ENCODE measurements at regions of chr5 and their contacts with region 1.

Region 1: GRCh38 chr5:173238312-173239232 is 3.6 kb upstream of the NKX2-5 start:
- DNase-seq: no peak
- ATAC-seq: no peak
- H3K4me3 Mint-ChIP-seq: peak overlapping the region; percentile 27
- H3K27ac Mint-ChIP-seq: no peak overlapping the region
- H3K4me1 Mint-ChIP-seq: peaks cover 38% of the 10 kb centered on the region
- H3K27me3 Mint-ChIP-seq: peaks cover 87% of the 10 kb centered on the region

Region 2: DNA sequence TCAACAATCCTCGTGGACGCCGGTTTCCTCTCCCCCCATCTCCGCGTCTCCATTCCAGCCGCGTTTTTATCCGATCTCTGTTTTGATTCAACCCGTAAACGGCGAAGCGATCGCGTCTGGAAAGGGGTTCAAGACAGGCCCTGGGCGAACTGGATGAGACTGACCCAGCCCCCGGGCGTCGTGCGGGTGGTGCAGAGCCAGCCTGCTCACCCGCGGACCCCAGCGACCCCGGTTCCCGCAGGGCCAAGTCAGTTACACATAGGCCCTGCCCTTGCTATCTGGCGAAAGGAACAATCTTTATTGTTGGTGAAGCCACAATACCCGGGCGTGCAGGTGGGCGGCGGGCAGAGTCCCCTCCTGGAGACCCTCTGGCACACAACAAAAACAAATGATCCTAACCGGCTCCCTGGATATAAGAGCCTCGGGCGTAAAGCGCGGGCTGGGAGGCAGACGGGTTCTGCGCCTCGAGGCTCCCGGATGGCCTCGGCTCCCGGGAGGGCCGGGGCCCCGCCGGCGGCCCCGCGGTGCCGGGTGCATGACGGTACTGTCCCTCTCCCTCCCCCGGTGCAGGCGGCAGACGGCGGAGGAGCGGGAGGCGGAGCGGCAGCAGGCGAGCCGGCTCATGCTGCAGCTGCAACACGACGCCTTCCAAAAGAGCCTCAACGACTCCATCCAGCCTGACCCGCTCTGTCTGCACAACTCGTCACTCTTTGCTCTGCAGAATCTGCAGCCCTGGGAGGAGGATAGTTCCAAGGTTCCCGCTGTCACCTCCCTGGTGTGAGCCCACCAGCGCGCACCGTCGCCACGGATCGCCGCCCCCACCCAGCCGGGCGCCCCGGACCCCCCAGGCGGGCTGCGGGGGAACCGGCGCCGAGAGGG is 1927.5 kb before region 1 on chr5:
- CTCF ChIA-PET with region 1: no interaction called
- POLR2A ChIA-PET with region 1: no interaction called
- intact Hi-C with region 1: loop called (anchors 5 to 10 kb)
- DNase-seq: peak; percentile 42
- ATAC-seq: no peak
- H3K4me3 Mint-ChIP-seq: peak overlapping the region; percentile 12
- H3K27ac Mint-ChIP-seq: no peak overlapping the region
- H3K4me1 Mint-ChIP-seq: peaks cover 22% of the 10 kb centered on the region
- H3K27me3 Mint-ChIP-seq: peaks cover 64% of the 10 kb centered on the region

Region 3: GRCh38 chr5:173283318-173284288 is 45.0 kb after region 1 on chr5:
- CTCF ChIA-PET with region 1: no interaction called
- POLR2A ChIA-PET with region 1: interaction called, 3 read pairs
- intact Hi-C with region 1: loop called in 1 of 2 experiments (anchors 1 kb)
- DNase-seq: peak; percentile 90
- ATAC-seq: peak; percentile 96
- H3K4me3 Mint-ChIP-seq: peak overlapping the region; percentile 25
- H3K27ac Mint-ChIP-seq: no peak overlapping the region
- H3K4me1 Mint-ChIP-seq: peaks cover 9% of the 10 kb centered on the region
- H3K27me3 Mint-ChIP-seq: peaks cover 44% of the 10 kb centered on the region

Region 4: DNA sequence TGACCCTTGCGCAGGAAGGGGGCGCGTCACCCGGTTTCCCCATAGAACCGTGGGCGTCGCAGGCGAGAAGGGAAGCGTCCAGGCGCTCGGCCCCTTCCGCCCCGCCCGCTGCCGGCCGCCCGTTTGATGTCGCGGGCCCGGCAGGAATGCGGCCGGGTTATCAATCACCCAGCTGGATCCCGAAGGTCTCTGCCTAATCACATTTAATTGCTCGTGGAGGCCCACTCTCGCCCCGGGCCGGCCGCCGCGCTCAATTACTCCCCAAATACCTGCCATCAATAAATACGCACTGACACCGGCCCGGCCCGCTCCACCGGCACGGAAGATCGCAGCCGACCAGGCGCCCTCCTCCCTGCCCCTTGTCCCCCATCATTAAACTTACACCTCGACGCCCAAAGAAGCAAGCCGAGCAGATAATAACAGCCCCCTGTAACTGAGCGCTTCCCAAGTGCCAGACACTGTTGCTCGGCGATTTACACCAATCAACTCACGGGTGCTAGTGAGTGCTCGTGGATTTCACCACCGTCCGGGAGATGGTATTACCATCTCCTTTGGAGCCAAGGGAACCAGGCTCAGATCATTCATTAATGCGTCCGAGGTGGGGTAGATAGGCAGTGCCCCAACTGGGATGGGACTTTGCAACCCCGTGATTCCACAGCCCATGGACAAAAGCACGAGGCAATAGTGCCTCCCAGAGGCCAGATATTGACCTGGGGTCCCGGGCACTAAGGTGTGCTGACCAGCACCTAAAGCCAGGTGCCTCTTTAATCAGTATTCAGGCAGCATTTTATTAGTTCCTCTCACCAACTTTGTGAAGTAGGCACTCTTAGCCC is 1497.1 kb after region 1 on chr5:
- CTCF ChIA-PET with region 1: no interaction called
- POLR2A ChIA-PET with region 1: no interaction called
- intact Hi-C with region 1: loop called in 1 of 2 experiments (anchors 5 kb)
- DNase-seq: peak; percentile 42
- ATAC-seq: no peak
- H3K4me3 Mint-ChIP-seq: no peak overlapping the region
- H3K27ac Mint-ChIP-seq: no peak overlapping the region
- H3K4me1 Mint-ChIP-seq: peaks cover 4% of the 10 kb centered on the region
- H3K27me3 Mint-ChIP-seq: peaks cover 72% of the 10 kb centered on the region

Measured in activated CD4-positive, alpha-beta T cell treated with anti-CD3 and anti-CD28 coated beads for 36 hours (primary cell).